Mucosa of descending colon (tissue), 3 donors: ENCODE measurements at regions of chr1 and their contacts with region 1.

Region 1: DNA sequence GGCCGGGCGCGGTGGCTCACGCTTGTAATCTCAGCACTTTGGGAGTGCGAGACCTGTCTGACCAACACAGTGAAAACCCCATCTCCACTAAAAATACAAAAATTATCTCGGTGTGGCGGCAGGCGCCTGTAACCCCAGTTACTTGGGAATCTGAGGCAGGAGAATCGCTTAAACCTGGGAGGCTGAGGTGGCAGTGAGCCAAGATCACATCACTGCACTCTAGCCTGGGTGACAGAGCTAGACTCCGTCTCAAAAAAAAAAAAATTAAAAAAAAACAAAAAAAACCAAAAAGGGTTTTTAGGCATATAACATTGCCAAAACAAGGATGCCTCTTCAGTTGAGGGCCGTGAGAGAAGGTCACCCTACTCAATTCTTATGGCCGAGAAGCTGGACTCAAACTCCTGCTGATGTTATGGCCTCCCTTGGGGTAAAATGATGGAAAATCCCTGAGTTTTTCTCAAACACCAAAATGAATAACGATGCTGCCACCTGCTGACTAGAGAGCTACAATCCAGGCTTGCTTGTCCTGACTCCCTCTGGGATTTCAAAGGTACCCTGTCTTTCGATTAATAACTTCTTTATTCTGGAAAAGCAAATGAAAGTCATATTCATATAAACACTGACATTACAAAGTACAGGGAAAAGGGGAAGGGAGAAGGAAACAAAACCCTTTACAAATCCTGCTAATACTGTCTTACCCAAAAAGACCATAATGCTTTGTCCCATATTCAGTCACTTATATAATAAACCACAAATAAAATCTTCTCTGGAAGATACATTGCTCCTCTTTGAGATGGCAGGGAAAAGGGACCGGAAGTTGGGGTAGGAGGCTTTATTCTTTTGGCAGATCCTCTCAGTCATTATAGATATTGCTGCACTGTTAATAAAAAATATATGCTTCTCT is 10.7 kb downstream of the RAB42 start:
- DNase-seq: peak in 1 of 3 donors; percentile 83
- ATAC-seq: peak; percentile 62
- H3K4me3 ChIP-seq: no peak overlapping the region
- H3K4me1 ChIP-seq: no peaks in the 10 kb centered on the region
- CTCF ChIP-seq: peak; percentile 34

Region 2: DNA sequence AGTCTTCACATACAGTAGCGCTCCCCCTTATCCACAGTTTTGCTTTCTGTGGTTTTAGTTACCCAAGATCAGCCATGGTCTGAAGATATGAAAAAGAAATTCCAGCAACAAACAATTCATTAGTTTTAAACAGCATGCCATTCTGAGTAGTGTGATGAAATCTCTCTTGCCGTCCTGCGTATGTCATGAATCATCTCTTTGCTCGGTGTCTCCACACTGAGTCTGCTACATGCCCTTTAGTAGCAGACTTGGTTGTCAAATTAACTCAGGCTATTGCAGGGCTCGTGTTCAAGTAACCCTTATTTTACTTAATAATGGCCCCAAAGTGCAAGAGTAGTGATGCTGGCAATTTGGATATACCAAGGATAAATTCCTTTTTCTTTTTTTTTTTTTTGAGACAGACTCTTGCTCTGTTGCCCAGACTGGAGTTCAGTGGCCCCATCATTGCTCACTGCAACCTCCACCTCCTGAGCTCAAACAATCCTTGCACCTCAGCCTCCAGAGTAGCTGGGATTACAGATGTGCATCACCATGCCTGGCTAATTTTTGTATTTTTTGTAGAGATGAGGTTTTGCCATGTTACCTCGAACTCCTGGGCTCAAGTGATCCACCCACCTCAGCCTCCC is 210.6 kb before region 1 on chr1:
- intact Hi-C with region 1: no loop called
- DNase-seq: no peak
- ATAC-seq: no peak
- H3K4me3 ChIP-seq: no peak overlapping the region
- H3K4me1 ChIP-seq: no peaks in the 10 kb centered on the region
- CTCF ChIP-seq: no peak

Region 3: GRCh38 chr1:28518000-28518744 is 84.6 kb before region 1 on chr1:
- intact Hi-C with region 1: loop called (anchors 10 kb)
- DNase-seq: peak; percentile 93 to 95 (median 94)
- ATAC-seq: peak; percentile 95
- H3K4me3 ChIP-seq: peak overlapping the region; percentile 54
- H3K4me1 ChIP-seq: peaks cover 11% of the 10 kb centered on the region
- CTCF ChIP-seq: peak; percentile 99

Region 4: GRCh38 chr1:28526889-28527288 is 75.9 kb before region 1 on chr1:
- intact Hi-C with region 1: loop called in 1 of 2 experiments (anchors 10 kb)
- DNase-seq: no peak
- ATAC-seq: no peak
- H3K4me3 ChIP-seq: no peak overlapping the region
- H3K4me1 ChIP-seq: no peaks in the 10 kb centered on the region
- CTCF ChIP-seq: no peak

Region 5: GRCh38 chr1:28756846-28757245 is 154.1 kb after region 1 on chr1:
- intact Hi-C with region 1: no loop called
- DNase-seq: no peak
- ATAC-seq: no peak
- H3K4me3 ChIP-seq: no peak overlapping the region
- H3K4me1 ChIP-seq: peaks cover 31% of the 10 kb centered on the region
- CTCF ChIP-seq: no peak